ENCODE measurements at regions of chr15 and their contacts with region 1.

Region 1: DNA sequence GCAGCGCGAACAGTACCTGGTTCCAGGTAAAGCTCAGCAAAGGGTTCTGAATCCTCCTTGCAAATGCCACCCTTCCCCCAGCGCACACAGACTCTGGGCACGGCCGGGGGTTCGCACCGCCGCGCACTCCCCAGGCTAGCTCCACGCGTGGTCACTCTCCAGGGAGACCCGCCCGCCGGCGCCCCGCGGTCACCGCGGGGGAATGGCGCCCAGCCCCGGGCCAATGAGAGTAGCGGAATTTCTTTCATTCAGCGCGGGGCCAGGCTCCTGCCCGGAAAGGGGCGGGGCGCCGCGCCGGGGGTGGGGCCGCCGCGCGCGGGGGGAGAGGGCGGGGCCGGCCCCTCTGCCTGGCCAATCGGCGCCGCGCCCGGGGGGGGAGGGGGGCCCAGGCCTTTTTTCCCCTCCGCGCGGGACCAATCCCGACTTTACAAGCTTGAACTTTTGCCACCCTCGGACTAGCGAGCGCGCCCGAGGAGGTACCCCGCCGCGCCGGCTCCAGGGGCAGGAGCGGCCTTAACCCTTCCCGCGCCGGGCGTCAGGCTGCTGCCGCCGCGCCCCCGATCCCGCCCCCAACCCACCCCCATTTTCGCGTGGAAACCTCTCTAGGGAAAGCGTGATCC is 1.1 kb upstream of the SMAD6 start:
- DNase-seq: peak; percentile 85
- H3K4me3 Mint-ChIP-seq: peak overlapping the region; percentile 85
- H3K27ac Mint-ChIP-seq: peak overlapping the region; percentile 61
- H3K4me1 Mint-ChIP-seq: peaks cover 16% of the 10 kb centered on the region
- H3K27me3 Mint-ChIP-seq: peaks cover 21% of the 10 kb centered on the region

Region 2: GRCh38 chr15:65887565-65887964 is 813.3 kb before region 1 on chr15:
- intact Hi-C with region 1: loop called (anchors 2 kb)
- DNase-seq: peak; percentile 64
- H3K4me3 Mint-ChIP-seq: peak overlapping the region; percentile 65
- H3K27ac Mint-ChIP-seq: peak overlapping the region; percentile 90
- H3K4me1 Mint-ChIP-seq: peaks cover 86% of the 10 kb centered on the region
- H3K27me3 Mint-ChIP-seq: no peaks in the 10 kb centered on the region

Region 3: DNA sequence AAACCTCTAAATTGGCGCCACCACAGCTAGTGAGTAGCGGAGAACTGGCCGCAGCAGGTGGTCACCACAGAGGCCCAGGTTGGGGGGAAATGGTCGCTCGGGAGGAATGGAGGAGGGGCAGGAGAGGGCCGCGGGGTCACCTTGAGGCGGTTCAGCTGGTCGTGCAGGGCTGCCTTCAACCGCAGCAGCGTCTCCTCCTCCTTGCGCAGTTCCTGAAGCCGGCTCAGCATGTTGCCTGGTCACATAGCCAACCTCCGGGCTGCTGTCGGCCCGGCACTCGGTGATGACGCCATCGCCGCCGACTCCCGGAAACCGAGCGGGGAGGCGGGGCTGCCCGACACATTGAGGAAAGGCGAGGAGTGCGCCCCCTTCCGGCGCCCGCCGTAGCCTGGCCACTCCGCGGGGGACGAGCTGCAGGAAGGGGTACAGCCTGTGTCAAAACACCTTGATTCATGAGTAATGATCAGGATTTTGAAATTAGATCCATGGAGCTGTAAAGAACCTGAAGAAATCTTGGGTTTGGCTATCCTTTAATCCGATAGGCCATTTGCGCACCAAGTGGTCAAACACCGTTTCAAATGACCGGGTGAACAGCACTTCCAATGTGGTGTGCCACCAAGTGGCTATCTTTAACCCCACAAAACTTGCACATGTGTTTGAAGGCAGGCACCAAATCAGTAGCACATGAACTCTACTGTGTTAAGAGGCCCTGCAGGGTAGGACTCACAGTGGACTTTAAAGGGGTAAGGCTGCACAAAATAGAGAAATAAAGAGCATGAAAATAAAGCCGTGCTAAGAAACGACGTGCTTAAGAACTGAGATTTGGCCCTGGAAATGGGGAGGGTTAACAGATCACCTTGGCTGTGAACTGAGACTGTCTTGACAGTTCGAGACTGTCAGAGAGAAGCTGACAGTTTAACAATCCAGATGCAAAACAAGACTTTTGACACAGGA is 203.1 kb before region 1 on chr15 and contains the start of gene SNAPC5:
- intact Hi-C with region 1: loop called (anchors 5 kb)
- DNase-seq: peak; percentile 97
- H3K4me3 Mint-ChIP-seq: peak within 1 kb of the TSS; percentile 98
- H3K27ac Mint-ChIP-seq: peak within 1 kb of the TSS; percentile 94
- H3K4me1 Mint-ChIP-seq: peaks cover 52% of the 10 kb centered on the region
- H3K27me3 Mint-ChIP-seq: no peaks in the 10 kb centered on the region
- total RNA-seq, gene SNAPC5: 37.3 and 39.0 TPM in 2 replicates

Region 4: GRCh38 chr15:66619151-66619903 is 81.6 kb before region 1 on chr15:
- intact Hi-C with region 1: loop called (anchors 2 kb)
- DNase-seq: peak; percentile 31
- H3K4me3 Mint-ChIP-seq: no peak overlapping the region
- H3K27ac Mint-ChIP-seq: no peak overlapping the region
- H3K4me1 Mint-ChIP-seq: no peaks in the 10 kb centered on the region
- H3K27me3 Mint-ChIP-seq: peaks cover 19% of the 10 kb centered on the region

Region 5: GRCh38 chr15:66654739-66655375 is 46.1 kb before region 1 on chr15:
- intact Hi-C with region 1: loop called (anchors 2 kb)
- DNase-seq: peak; percentile 27
- H3K4me3 Mint-ChIP-seq: no peak overlapping the region
- H3K27ac Mint-ChIP-seq: no peak overlapping the region
- H3K4me1 Mint-ChIP-seq: peaks cover 10% of the 10 kb centered on the region
- H3K27me3 Mint-ChIP-seq: peaks cover 11% of the 10 kb centered on the region

Region 6: GRCh38 chr15:66851226-66852071 is 150.5 kb after region 1 on chr15:
- intact Hi-C with region 1: loop called (anchors 1 kb)
- DNase-seq: peak; percentile 67
- H3K4me3 Mint-ChIP-seq: no peak overlapping the region
- H3K27ac Mint-ChIP-seq: no peak overlapping the region
- H3K4me1 Mint-ChIP-seq: no peaks in the 10 kb centered on the region
- H3K27me3 Mint-ChIP-seq: peaks cover 7% of the 10 kb centered on the region

Region 7: DNA sequence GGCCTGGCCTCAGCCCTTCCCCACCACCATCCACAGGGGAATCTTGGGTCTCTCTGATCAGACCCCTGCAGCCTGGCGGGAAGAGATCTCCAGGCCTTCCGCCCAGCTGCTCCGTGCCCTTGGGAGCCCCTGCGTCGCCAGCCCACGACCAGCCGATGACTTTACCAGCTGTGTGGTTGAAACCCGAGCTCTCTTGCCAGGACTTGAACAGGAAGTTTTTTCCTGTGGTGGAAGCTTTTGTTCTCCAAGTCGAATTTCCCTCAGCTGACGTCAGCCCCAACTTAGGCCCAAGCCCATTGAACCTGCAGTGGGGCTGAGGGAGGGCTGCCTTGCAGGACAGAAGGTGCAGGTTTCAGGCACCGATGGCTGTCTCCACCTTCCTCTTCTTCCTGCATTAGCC is 312.8 kb after region 1 on chr15:
- intact Hi-C with region 1: no loop called
- DNase-seq: no peak
- H3K4me3 Mint-ChIP-seq: no peak overlapping the region
- H3K27ac Mint-ChIP-seq: no peak overlapping the region
- H3K4me1 Mint-ChIP-seq: peaks cover 21% of the 10 kb centered on the region
- H3K27me3 Mint-ChIP-seq: peaks cover 7% of the 10 kb centered on the region

Region 8: DNA sequence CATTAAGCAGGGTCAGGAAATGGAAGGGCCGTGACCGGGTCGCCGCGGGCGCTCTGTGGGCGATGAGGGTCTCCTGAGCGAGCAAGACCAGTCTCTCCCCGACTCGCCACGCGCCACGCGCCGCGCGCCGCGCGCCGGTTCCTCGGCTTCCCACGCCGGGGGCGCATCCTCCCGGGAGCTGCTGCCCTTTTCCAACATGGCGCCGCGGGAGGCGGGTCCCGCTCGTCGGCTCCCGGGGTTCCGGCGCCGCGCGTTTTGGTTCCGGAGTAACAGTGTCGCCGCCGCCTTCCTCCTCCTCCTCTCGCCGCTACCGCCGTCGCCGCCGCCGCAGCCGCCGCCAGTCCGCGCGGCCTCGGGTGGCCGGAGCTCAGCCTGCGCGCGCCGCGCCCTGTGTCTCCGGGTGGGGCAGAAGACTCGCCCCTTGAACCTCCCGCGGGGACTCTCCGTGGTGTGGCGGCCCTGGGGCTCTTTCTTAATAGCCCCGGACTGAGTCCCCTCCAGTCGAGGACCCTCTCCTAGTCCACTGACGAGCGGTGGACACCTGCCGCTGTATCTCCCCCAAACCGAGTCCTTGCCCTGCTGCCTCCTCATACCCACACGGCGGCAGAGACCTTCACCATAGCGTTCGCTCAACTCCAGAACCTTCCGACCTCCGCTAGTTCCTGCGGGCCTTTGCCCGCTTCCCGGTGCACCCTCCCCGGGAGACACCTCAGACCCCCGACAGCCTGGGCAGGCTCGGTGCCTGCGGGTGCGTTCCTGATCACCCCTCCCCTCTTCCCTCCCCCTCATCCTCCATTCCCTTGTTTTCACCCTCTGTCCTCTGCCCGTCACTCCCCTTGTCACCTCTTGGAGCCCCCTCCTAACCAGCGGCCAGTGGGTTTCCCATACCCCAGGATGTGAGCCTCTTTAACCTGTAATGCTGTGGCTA is 841.8 kb after region 1 on chr15 and contains the start of gene MAP2K5:
- intact Hi-C with region 1: loop called (anchors 10 kb)
- DNase-seq: peak; percentile 82
- H3K4me3 Mint-ChIP-seq: peak within 1 kb of the TSS; percentile 98
- H3K27ac Mint-ChIP-seq: peak within 1 kb of the TSS; percentile 96
- H3K4me1 Mint-ChIP-seq: peaks cover 43% of the 10 kb centered on the region
- H3K27me3 Mint-ChIP-seq: no peaks in the 10 kb centered on the region
- total RNA-seq, gene MAP2K5: 22.1 and 27.5 TPM in 2 replicates

Measured in activated T-helper 1 cell treated with anti-CD3 and anti-CD28 coated beads, Interleukin-12 subunit alpha, Interleukin-12 subunit beta, Interleukin-2, Interleukin-4 antibody, amounts not matched to agents 30 ng/mL and 10 ng/mL and 1 ng/mL, durations not matched to agents 14 hours and 24 hours and 36 hours (primary cell).